Calu3 (cell line): ENCODE measurements at regions of chr7 and their contacts with region 1.

Region 1: DNA sequence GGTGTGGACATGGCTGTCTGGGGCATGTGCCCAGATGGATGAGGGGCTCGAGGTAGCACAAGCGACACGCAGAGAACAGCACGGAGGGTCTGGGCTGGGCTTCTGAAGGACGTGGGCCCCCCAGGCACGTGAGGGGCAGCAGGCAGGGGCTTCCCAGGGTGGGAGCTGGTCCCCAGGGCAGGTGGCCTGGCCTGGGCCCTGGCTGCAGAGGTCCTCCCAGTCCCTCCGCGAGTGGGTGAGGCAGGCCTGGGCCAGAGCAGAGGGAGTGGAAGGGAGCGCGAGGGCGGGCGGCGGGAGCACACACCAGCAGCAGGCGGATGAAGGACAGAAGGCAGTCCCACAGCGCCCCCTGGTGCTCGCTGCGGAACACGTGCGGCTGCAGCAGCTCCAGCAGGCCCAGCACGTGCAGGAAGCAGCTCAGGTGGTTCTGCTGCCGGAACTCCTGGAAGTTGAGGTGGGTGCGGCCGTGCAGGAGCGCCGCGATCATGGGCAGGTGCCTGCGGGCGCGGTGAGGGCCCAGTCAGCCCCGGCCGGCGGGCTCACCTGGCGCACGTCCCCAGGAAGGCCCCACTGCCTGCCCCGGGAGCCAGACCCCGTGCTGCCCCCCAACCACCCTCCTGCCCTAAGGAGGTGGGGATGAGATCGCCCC is 14.7 kb upstream of the MICALL2 start:
- DNase-seq: peak; percentile 98
- H3K4me3 Mint-ChIP-seq: no peak overlapping the region
- H3K27ac Mint-ChIP-seq: peak overlapping the region; percentile 44
- H3K4me1 Mint-ChIP-seq: no peaks in the 10 kb centered on the region
- H3K27me3 Mint-ChIP-seq: no peaks in the 10 kb centered on the region
- CTCF ChIP-seq: peak; percentile 99

Region 2: DNA sequence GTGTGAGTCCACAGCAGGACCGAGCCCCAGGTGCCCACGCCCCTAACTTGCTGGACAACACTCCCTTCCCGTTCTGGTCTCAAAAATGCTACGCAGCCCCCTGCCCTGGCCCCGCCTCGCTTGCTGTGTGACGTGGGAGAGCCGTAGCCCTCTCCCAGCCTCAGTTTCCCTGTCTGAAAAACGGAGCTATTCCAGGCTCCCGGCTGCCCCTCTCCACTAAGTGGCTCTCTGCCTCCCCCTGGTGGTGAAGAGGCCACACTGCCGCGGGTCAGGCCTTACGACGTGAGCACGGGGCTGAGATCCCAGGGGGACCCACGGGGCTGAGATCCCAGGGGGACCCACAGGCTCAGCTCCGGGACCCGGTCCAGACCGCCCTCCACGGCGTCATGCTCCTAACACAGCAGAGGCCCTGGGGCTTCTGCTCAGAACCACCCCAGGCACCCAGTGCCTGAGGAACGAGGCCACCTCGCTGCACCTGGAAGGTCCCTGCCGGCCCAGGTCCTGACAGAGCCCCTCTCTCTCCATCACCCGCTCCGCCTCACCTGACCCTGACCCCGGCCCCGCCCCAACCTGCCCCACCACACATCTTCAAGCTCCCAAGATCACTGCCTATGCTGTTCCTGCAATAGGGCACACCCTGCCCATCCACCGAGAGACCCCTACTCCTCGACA is 41.4 kb before region 1 on chr7:
- CTCF ChIA-PET with region 1: interaction called, 11 read pairs
- intact Hi-C with region 1: no loop called
- DNase-seq: peak; percentile 90
- H3K4me3 Mint-ChIP-seq: no peak overlapping the region
- H3K27ac Mint-ChIP-seq: peak overlapping the region; percentile 0
- H3K4me1 Mint-ChIP-seq: no peaks in the 10 kb centered on the region
- H3K27me3 Mint-ChIP-seq: peaks cover 16% of the 10 kb centered on the region
- CTCF ChIP-seq: peak; percentile 100

Region 3: GRCh38 chr7:1460821-1461645 is 13.0 kb before region 1 on chr7:
- CTCF ChIA-PET with region 1: interaction called, 11 read pairs
- intact Hi-C with region 1: no loop called
- DNase-seq: peak; percentile 69
- H3K4me3 Mint-ChIP-seq: peak overlapping the region; percentile 0
- H3K27ac Mint-ChIP-seq: peak overlapping the region; percentile 7
- H3K4me1 Mint-ChIP-seq: peaks cover 46% of the 10 kb centered on the region
- H3K27me3 Mint-ChIP-seq: no peaks in the 10 kb centered on the region
- CTCF ChIP-seq: no peak

Region 4: GRCh38 chr7:1579481-1580421 is 105.8 kb after region 1 on chr7:
- CTCF ChIA-PET with region 1: no interaction called
- intact Hi-C with region 1: no loop called
- DNase-seq: peak; percentile 91
- H3K4me3 Mint-ChIP-seq: no peak overlapping the region
- H3K27ac Mint-ChIP-seq: no peak overlapping the region
- H3K4me1 Mint-ChIP-seq: peaks cover 11% of the 10 kb centered on the region
- H3K27me3 Mint-ChIP-seq: peaks cover 62% of the 10 kb centered on the region
- CTCF ChIP-seq: peak; percentile 95